ENCODE measurements at regions of chr1 and their contacts with region 1.

Region 1: DNA sequence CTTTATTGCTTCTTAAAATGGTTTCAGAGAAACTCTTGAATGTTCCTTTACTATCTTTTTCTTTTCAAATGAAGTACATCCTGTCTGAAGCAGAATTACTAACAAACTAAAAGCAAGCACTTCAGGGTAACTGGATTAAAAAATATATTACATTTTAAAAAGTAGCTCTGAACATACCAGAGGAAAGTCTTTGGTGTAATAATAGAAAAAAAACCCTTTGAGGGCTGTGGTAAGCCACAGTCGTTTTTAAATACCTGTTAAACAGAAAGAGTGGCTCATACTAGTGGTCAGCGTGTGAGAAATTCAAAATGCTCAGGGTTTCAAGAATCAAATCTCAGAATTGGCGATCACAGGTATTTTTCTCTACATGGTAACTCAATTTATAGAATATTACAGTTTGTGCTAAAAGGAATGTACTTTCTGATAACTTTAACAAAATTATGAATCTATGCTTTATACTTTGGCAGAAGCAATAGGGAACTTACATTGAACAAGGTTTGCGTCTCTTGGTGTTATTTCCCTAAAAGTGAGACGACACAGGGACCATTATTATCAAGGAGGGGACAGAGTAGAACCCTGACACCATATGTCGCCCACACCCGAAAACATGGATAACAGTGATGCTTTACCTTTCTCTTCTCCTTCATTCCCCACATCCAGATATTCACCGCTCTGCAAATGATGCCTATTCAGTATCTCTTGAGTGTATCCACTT is 97.0 kb upstream of the DPH5 start:
- DNase-seq: no peak
- H3K4me3 ChIP-seq: no peak overlapping the region
- H3K27ac ChIP-seq: no peak overlapping the region
- H3K4me1 ChIP-seq: peaks cover 17% of the 10 kb centered on the region
- CTCF ChIP-seq: no peak

Region 2: GRCh38 chr1:101071470-101071891 is 51.1 kb before region 1 on chr1:
- CTCF ChIA-PET with region 1: no interaction called
- POLR2A ChIA-PET with region 1: no interaction called
- intact Hi-C with region 1: loop called (anchors 5 kb)
- DNase-seq: no peak
- H3K4me3 ChIP-seq: no peak overlapping the region
- H3K27ac ChIP-seq: no peak overlapping the region
- H3K4me1 ChIP-seq: no peaks in the 10 kb centered on the region
- CTCF ChIP-seq: no peak

Region 3: GRCh38 chr1:101309334-101310311 is 187.0 kb after region 1 on chr1:
- CTCF ChIA-PET with region 1: no interaction called
- POLR2A ChIA-PET with region 1: no interaction called
- intact Hi-C with region 1: no loop called
- DNase-seq: peak; percentile 70
- H3K4me3 ChIP-seq: peak overlapping the region; percentile 18
- H3K27ac ChIP-seq: no peak overlapping the region
- H3K4me1 ChIP-seq: peaks cover 24% of the 10 kb centered on the region
- CTCF ChIP-seq: peak; percentile 94